Heart right ventricle (tissue), 16 donors: ENCODE measurements at regions of chr1 and their contacts with region 1.

Region 1: DNA sequence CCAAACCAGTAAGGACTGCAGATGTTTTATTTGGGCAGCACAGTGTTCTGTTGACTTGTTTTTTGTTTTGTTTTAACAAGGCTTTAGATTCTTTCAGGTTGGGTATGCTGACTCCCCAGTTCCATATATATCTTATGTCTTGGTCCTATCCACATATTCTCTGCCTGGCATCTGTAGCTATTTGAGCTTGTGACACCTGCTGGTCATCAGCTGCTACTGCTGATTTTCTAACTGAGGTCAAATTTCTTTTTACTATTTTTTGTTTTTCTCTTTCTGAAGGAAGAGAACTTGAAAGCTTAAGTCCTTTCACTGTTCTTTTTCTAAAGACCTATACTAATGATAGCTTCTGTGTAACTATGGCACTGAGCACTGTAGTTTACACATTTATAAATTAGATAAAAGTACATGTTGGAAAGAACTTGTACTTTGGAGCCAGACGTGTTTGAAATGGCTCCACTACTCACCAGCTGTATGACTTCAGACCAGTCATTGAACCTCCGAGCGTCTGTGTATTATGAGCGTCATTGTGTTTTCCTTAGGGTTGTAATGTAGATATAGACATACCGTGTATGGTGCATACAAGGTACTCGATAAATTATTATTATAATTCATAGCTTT is 109.4 kb downstream of the NRDC start:
- DNase-seq: no peak
- ATAC-seq: peak; percentile 63 to 83 (median 68)
- H3K4me3 ChIP-seq: no peak overlapping the region
- H3K27ac ChIP-seq: peak overlapping the region in 3 of 10 donors; percentile 15 to 42 (median 16)
- H3K4me1 ChIP-seq: peaks cover 0 to 13% (median 9%) of the 10 kb centered on the region in 9 donors
- H3K27me3 ChIP-seq: no peaks in the 10 kb centered on the region
- CTCF ChIP-seq: peak; percentile 65 to 89 (median 83)

Region 2: DNA sequence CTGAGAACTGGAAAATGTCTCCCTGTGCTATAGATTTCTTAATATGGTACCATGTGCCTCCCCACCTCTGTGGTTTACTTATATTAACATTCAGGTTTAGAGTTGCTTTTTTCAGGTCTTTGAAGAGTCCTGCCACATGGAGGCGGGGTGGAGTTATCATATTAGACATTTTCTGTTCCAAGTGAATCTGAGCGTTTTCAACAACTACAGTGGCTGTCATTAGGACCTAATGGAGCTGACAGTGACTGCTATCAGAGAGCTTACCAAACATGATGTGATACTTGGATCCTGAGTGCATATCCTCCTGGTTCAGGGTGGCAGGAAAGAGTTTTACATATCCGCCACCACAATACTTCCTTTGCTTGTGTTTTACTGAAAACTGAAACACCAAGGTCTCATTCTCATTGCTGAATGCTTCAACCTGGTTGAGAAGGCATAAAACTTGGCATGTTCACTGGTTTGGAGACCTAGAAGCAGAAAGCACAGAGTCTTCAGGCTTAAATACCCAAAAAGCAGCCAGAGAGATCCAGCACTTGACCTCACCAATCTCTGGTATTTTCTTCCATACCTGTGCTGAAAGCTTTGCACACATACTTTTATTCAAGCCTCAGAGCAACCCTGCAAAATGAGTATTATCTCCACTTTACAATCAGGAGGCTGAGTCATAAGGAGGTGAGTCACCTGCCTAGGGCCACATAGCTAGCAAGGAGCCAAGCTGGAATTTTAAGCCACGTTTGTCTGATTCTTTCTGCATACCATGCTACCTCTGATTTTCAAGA is 199.6 kb before region 1 on chr1:
- intact Hi-C with region 1: loop called in 2 of 10 experiments (anchors 5 kb)
- DNase-seq: no peak
- ATAC-seq: peak in 6 of 8 donors; percentile 32 to 48 (median 38)
- H3K4me3 ChIP-seq: no peak overlapping the region
- H3K27ac ChIP-seq: peak overlapping the region in 2 of 10 donors; percentile 19 to 71
- H3K4me1 ChIP-seq: peaks cover 0 to 56% (median 22%) of the 10 kb centered on the region in 9 donors
- H3K27me3 ChIP-seq: no peaks in the 10 kb centered on the region
- CTCF ChIP-seq: peak in 5 of 9 donors; percentile 14 to 43 (median 39)

Region 3: DNA sequence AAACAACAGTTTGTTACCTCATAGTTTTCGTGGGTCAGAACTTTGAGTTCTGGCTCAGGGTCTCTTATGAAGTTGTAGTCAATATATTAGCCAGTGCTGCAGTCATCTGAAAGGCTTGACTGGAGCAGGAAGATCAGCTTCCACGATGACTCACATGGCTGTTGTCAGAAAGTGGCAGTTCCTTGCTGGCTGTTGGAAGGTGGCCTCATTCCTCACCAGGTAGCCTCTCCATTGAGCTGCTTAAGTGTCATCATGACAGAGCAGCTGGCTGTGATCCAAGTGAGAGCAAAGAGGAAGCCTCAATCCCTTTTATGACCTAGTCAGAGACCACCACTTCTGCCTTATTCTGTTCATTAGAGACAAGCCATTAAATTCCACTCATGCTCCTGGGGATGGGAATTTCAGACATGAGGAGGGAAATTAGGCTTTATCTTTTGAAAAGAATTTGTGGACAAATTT is 146.6 kb before region 1 on chr1:
- intact Hi-C with region 1: loop called in 8 of 10 experiments (anchors 1 to 10 kb)
- DNase-seq: peak in 1 of 2 donors; percentile 18
- ATAC-seq: peak in 4 of 8 donors; percentile 24 to 84 (median 52)
- H3K4me3 ChIP-seq: no peak overlapping the region
- H3K27ac ChIP-seq: peak overlapping the region in 6 of 10 donors; percentile 12 to 56 (median 32)
- H3K4me1 ChIP-seq: peaks cover 0 to 89% (median 57%) of the 10 kb centered on the region in 9 donors
- H3K27me3 ChIP-seq: no peaks in the 10 kb centered on the region
- CTCF ChIP-seq: no peak

Region 4: DNA sequence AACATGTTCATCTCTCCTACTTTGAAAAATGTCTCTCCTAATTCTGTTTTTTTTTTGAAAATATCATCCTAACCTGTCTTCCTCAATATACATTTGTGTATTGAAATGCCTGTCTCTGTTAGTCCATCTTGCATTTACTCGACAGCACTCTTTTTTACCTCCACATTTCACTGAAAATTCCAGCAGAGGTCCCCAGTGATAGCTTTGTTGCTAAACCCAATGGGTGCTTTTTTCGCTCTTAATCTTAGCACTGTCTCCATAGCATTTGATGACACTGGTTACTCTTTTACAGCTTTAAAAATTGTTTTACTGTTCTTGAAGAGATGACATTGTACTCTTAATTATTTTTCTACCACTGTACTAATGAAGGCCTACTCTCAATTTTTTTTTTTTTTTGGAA is 141.4 kb before region 1 on chr1:
- intact Hi-C with region 1: loop called (anchors 1 to 10 kb)
- DNase-seq: no peak
- ATAC-seq: peak in 4 of 8 donors; percentile 38 to 67 (median 52)
- H3K4me3 ChIP-seq: no peak overlapping the region
- H3K27ac ChIP-seq: no peak overlapping the region
- H3K4me1 ChIP-seq: peaks cover 0 to 78% (median 27%) of the 10 kb centered on the region in 9 donors
- H3K27me3 ChIP-seq: no peaks in the 10 kb centered on the region
- CTCF ChIP-seq: peak in 7 of 9 donors; percentile 34 to 61 (median 47)

Region 5: GRCh38 chr1:51636764-51637522 is 132.1 kb before region 1 on chr1:
- intact Hi-C with region 1: loop called in 3 of 10 experiments (anchors 5 to 10 kb)
- DNase-seq: no peak
- ATAC-seq: peak in 6 of 8 donors; percentile 30 to 78 (median 47)
- H3K4me3 ChIP-seq: no peak overlapping the region
- H3K27ac ChIP-seq: peak overlapping the region in 4 of 10 donors; percentile 9 to 57 (median 24)
- H3K4me1 ChIP-seq: peaks cover 2 to 44% (median 23%) of the 10 kb centered on the region in 9 donors
- H3K27me3 ChIP-seq: no peaks in the 10 kb centered on the region
- CTCF ChIP-seq: no peak

Region 6: GRCh38 chr1:51642739-51643142 is 126.3 kb before region 1 on chr1:
- intact Hi-C with region 1: loop called in 2 of 10 experiments (anchors 5 to 10 kb)
- DNase-seq: peak in 1 of 2 donors; percentile 28
- ATAC-seq: peak; percentile 51 to 86 (median 80)
- H3K4me3 ChIP-seq: no peak overlapping the region
- H3K27ac ChIP-seq: peak overlapping the region; percentile 23 to 79 (median 59)
- H3K4me1 ChIP-seq: peaks cover 13 to 57% (median 41%) of the 10 kb centered on the region in 9 donors
- H3K27me3 ChIP-seq: no peaks in the 10 kb centered on the region
- CTCF ChIP-seq: no peak